Activated naive CD4-positive, alpha-beta T cell treated with anti-CD3 and anti-CD28 coated beads for 36 hours (primary cell): ENCODE measurements at regions of chr1 and their contacts with region 1.

Region 1: DNA sequence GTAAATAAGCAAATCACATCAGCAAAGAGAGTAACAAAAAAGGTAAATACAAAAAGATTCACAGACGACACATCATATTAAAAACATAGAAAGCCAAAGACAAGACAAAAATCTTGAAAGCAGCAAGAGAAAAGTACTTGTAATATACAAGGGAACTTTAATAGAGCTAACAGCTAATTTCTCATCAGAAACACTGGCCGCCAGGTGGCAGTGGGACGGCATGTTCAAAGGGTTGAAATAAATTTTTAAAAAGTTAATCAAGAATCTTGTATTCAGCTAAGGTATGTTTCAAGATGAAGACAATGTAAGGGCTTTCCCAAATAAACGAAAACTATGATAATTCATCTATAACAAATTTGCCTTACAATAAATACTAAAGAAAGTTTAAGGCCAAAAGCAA is 358.1 kb downstream of the LRRIQ3 start:
- DNase-seq: peak; percentile 26
- H3K4me3 Mint-ChIP-seq: no peak overlapping the region
- H3K27ac Mint-ChIP-seq: no peak overlapping the region
- H3K4me1 Mint-ChIP-seq: no peaks in the 10 kb centered on the region
- H3K27me3 Mint-ChIP-seq: no peaks in the 10 kb centered on the region

Region 2: DNA sequence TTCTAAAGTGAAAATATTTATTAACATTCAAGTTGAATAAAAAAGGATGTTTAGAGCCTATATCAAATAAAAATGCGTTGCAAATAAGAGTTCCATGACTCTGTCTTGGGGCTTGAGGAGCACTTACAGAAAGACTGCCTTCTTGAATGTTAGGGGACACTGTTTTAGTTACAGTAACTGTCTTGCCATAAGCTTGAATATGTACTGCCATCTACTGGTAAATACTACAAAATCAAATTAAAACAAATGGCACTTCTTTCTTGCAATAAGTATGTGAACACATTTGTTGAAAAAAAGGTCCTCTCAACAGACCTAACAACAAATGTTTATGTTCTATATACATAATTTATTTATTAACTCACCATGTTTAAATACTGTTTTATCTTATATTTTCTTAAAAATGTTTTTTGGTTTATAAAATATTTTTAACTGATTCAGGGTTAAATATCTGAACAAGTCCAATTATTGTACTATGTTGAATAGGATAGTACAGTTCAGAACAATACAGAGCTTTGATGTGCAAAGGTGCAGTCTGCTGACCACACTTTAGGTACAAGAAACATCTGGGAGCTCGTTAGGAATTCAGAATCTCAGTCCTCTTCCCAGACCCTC is 158.5 kb after region 1 on chr1:
- CTCF ChIA-PET with region 1: no interaction called
- intact Hi-C with region 1: loop called (anchors 1 kb)
- DNase-seq: no peak
- H3K4me3 Mint-ChIP-seq: no peak overlapping the region
- H3K27ac Mint-ChIP-seq: no peak overlapping the region
- H3K4me1 Mint-ChIP-seq: no peaks in the 10 kb centered on the region
- H3K27me3 Mint-ChIP-seq: no peaks in the 10 kb centered on the region

Region 3: GRCh38 chr1:74468982-74469603 is 629.2 kb after region 1 on chr1:
- CTCF ChIA-PET with region 1: no interaction called
- intact Hi-C with region 1: loop called (anchors 5 kb)
- DNase-seq: no peak
- H3K4me3 Mint-ChIP-seq: no peak overlapping the region
- H3K27ac Mint-ChIP-seq: no peak overlapping the region
- H3K4me1 Mint-ChIP-seq: no peaks in the 10 kb centered on the region
- H3K27me3 Mint-ChIP-seq: peaks cover 4% of the 10 kb centered on the region